Common myeloid progenitor, CD34-positive (primary cell): ENCODE measurements at regions of chr12 and their contacts with region 1.

Region 1: DNA sequence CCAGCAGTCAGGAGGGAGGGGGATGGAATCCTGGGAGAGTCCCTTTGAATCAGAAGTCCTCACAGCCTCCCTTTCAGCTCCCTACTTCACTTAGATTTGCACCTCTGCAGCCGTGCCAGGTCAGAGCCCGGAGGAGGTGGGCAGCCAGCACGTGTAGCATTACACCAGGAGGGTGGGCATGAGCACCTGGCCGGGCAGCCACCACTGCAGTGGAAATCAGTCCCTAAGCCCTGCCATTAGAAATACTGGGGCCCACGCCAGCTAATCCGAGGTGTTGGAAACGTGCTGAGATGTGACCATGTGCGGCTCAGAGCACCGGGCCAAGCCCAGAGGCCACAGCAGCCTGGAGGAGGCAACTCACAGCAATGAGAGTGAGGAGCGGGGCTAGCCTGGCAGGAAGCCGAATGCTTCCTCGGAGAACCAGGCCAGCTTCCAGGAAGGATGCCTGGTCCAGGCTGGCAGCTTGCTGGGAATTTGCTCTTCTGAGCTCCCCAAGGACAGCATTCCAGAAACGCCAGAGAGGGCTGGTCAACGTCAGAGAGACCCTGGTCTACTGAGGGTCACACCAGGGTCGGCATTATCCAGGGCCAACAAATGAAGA is 9.4 kb upstream of the CACNA2D4 start:
- DNase-seq: no peak
- H3K4me3 ChIP-seq: no peak overlapping the region
- H3K27ac ChIP-seq: no peak overlapping the region
- H3K4me1 ChIP-seq: peaks cover 0 to 38% (median 19%) of the 10 kb centered on the region in 4 experiments
- H3K27me3 ChIP-seq: no peaks in the 10 kb centered on the region

Region 2: GRCh38 chr12:1842905-1843640 is 84.8 kb before region 1 on chr12:
- CTCF ChIA-PET with region 1: no interaction called
- POLR2A ChIA-PET with region 1: no interaction called
- DNase-seq: no peak
- H3K4me3 ChIP-seq: peak overlapping the region in 1 of 7 experiments; percentile 21
- H3K27ac ChIP-seq: no peak overlapping the region
- H3K4me1 ChIP-seq: peaks cover 0 to 48% (median 12%) of the 10 kb centered on the region in 4 experiments
- H3K27me3 ChIP-seq: no peaks in the 10 kb centered on the region

Region 3: DNA sequence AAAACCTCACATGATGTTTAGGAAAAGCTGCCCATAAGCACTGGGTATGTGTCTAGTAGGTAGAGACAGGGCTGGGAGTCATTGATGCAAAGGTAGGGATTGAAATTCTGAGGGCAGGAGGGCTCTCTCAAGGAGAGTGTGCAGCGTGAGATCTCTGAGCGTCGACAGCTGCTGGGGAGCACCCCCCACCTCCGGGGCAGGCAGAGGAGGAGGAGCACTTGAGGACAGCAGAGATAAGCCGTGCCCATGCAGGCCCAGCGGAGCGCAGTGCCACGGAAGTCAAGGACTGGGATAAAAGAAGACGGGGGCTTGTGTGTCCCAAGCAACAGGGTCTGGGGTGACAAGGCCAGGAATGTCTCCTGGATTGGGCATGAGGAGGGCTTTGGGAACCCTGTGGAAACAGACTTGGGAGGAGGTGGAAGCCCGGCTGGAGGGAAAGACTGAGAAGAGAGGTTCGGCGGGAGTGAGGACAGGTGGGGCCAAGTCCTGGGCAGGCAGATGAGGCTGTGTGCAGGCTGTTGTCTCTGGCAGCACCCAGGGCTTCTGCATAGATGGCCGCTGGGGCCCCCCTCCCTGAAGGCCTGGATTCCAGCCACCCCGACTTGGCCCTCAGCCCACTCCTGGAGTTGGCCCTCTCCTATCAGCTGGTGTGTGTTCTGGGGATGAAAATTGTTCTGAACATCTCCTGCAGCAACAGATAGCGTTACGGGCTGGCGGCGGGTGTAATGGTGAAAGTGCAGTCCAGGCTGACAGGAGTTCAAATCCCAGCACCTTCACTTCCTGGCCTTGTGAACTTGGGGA is 11.3 kb before region 1 on chr12:
- CTCF ChIA-PET with region 1: interaction called, 10 read pairs
- POLR2A ChIA-PET with region 1: interaction called, 4 read pairs
- DNase-seq: peak in 1 of 3 donors; percentile 31
- H3K4me3 ChIP-seq: no peak overlapping the region
- H3K27ac ChIP-seq: no peak overlapping the region
- H3K4me1 ChIP-seq: peaks cover 11 to 63% (median 54%) of the 10 kb centered on the region in 4 experiments
- H3K27me3 ChIP-seq: no peaks in the 10 kb centered on the region